Activated CD4-positive, alpha-beta T cell treated with anti-CD3 and anti-CD28 coated beads for 36 hours (primary cell): ENCODE measurements at regions of chr4 and their contacts with region 1.

Region 1: DNA sequence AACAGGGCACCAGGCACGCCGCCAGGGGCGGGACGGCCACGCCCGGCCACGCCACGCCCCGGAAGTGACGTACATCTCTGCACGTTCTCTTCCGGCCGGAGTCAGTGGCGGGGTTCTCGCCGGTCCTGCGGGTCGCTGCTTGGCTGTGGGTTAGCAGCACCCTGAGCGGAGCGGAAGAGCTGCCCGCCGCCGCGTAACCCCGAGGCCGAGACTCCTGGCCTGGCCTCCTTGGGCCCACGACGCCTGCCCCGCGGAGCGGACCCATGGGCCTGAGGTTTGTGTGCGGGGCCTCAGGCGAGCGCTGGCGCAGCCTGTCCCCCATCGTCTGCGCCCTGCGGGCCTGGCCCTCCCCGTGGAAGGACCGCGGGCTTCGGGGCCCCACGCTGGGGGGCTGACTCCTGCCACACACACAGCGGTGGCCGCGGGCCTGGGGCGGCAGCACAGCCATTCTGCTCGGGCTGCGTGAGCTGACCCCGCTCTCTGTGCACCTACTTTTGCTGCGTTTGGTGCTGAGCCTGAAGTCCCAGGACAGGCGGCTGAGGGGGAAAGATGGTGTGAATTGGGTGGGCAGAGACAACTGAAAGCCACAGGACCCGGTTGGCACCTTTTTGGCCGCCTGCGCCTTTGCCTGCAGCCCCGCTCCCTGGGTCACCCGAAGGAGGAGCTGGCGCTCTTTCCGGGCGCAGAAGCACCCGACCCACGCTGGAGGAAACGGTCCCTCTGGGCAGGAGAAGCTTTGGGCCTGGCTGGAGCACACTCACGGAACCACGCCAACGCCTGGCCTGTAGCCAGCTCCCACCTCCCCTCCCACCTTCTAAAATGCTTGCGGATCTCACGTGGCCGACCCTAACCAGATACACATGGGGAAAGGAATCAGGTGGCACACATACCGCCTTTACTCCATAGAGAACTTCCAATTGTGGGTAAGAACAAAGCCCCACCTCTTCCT is 28.1 kb downstream of the NOP14 start:
- DNase-seq: peak; percentile 98
- ATAC-seq: peak; percentile 34
- H3K4me3 Mint-ChIP-seq: peak overlapping the region; percentile 90
- H3K27ac Mint-ChIP-seq: peak overlapping the region; percentile 95
- H3K4me1 Mint-ChIP-seq: peaks cover 53% of the 10 kb centered on the region
- H3K27me3 Mint-ChIP-seq: no peaks in the 10 kb centered on the region

Region 2: GRCh38 chr4:2241410-2242353 is 693.4 kb before region 1 on chr4 and contains the starts of genes HAUS3 and POLN:
- CTCF ChIA-PET with region 1: no interaction called
- POLR2A ChIA-PET with region 1: no interaction called
- intact Hi-C with region 1: loop called in 1 of 2 experiments (anchors 5 kb)
- DNase-seq: peak; percentile 99
- ATAC-seq: peak; percentile 97
- H3K4me3 Mint-ChIP-seq: peak within 1 kb of the TSS; percentile 91
- H3K27ac Mint-ChIP-seq: peak within 1 kb of the TSS; percentile 88
- H3K4me1 Mint-ChIP-seq: peaks cover 54% of the 10 kb centered on the region
- H3K27me3 Mint-ChIP-seq: no peaks in the 10 kb centered on the region
- total RNA-seq, gene HAUS3: 14.6 to 18.6 TPM
- total RNA-seq, gene POLN: 2.3 to 3.2 TPM

Region 3: GRCh38 chr4:2536193-2537010 is 398.7 kb before region 1 on chr4 and contains the start of gene FAM193A:
- CTCF ChIA-PET with region 1: no interaction called
- POLR2A ChIA-PET with region 1: interaction called, 3 read pairs
- intact Hi-C with region 1: loop called in 1 of 2 experiments (anchors 1 kb)
- DNase-seq: peak; percentile 100
- ATAC-seq: peak; percentile 97
- H3K4me3 Mint-ChIP-seq: peak within 1 kb of the TSS; percentile 87
- H3K27ac Mint-ChIP-seq: peak within 1 kb of the TSS; percentile 88
- H3K4me1 Mint-ChIP-seq: peaks cover 24% of the 10 kb centered on the region
- H3K27me3 Mint-ChIP-seq: no peaks in the 10 kb centered on the region
- total RNA-seq, gene FAM193A: 22.1 to 30.1 TPM

Region 4: GRCh38 chr4:2761035-2761923 is 173.8 kb before region 1 on chr4:
- CTCF ChIA-PET with region 1: interaction called, 6 read pairs
- POLR2A ChIA-PET with region 1: interaction called, 4 read pairs
- intact Hi-C with region 1: loop called (anchors 1 to 5 kb)
- DNase-seq: peak; percentile 59
- ATAC-seq: peak; percentile 9
- H3K4me3 Mint-ChIP-seq: no peak overlapping the region
- H3K27ac Mint-ChIP-seq: no peak overlapping the region
- H3K4me1 Mint-ChIP-seq: peaks cover 11% of the 10 kb centered on the region
- H3K27me3 Mint-ChIP-seq: no peaks in the 10 kb centered on the region

Region 5: DNA sequence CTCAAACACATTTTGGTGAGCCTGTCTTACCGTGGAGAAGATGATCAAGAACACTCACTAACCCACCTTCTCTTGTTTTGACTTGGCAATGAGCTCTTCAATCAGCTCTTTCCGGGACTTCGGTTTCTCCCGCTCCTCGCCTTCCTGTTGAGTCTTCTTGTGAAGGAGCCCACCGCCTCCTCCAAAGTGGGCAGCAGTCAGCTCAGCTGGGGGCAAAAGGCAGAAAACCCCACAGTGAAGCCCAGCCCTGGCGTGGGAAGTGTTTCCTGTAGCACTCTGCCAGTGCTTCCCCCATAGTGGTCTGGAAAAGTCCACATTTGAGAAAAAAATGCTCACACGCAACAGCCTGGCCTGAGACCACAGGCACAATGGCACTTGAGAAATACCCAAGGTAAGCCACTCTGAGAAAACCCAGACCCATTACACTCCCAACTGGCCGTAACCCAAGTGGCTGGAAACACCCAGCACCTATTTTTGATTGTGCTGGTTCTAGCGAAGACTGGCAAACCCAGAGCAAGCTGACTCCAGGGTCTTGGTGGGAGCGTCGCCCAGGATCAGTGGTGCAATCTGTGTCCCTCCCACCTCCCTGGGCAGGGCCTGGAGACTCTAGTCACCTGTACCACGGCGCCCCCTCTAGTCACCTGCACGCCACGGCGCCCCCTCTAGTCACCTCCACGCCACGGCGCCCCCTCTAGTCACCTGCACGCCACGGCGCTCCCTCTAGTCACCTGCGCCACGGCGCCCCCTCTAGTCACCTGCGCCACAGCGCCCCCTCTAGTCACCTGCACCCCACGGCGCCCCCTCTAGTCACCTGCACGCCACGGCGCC is 19.5 kb after region 1 on chr4:
- CTCF ChIA-PET with region 1: interaction called, 45 read pairs
- POLR2A ChIA-PET with region 1: interaction called, 40 read pairs
- intact Hi-C with region 1: loop called (anchors 1 kb)
- DNase-seq: peak; percentile 88
- ATAC-seq: peak; percentile 83
- H3K4me3 Mint-ChIP-seq: peak overlapping the region; percentile 51
- H3K27ac Mint-ChIP-seq: peak overlapping the region; percentile 90
- H3K4me1 Mint-ChIP-seq: peaks cover 69% of the 10 kb centered on the region
- H3K27me3 Mint-ChIP-seq: no peaks in the 10 kb centered on the region

Region 6: DNA sequence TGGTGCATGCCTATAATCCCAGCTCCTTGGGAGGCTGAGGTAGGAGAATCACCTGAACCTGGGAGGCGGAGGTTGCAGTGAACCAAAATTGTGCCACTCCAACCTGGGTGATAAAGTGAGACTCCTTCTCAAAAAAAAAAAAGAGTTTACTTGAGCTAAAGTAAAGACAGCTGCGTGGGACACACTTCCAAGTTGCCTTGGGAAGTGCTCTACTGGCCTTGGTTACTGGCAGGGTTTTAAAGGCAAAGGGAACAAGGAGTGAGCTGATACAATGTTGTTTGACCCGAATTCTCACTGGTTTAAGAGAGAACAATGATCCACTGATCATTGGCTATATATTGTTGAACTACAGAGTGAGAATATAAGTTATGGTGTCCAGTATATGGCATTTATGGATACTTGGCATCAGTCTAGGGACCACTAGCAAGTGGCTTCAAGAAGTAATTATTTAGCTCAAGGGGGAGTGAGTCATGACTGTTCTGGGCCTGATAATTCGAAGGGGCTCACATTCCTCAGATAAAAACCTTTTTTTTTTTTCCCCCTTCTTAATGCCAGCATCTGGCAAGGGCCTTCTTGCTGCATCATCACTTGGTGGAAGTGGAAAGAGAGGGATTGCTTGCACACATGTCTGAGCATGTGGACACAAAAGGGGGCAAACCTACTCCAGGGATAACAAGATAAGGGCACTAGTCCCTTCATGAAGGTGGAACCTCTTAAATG is 60.6 kb after region 1 on chr4:
- CTCF ChIA-PET with region 1: no interaction called
- POLR2A ChIA-PET with region 1: no interaction called
- intact Hi-C with region 1: no loop called
- DNase-seq: no peak
- ATAC-seq: no peak
- H3K4me3 Mint-ChIP-seq: no peak overlapping the region
- H3K27ac Mint-ChIP-seq: no peak overlapping the region
- H3K4me1 Mint-ChIP-seq: no peaks in the 10 kb centered on the region
- H3K27me3 Mint-ChIP-seq: peaks cover 2% of the 10 kb centered on the region

Region 7: DNA sequence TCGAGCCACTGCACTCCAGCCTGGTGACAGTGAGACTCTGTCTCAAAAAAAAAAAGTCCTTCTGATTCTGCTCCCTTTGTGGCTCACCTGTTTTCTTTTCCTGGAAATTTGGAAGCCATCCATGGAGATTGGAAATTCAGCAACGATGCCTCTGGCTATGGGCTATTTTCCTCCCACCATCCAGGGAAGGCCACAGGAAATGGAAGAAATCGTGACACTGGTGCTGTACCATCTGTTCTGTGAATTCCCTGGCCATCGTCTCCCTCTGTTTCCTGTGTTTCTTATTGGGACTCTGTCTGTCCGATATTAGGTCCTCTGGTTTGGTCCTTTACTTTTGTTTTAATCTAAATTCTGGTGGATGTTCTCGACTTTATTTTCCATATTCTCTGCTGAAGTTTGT is 801.7 kb after region 1 on chr4:
- CTCF ChIA-PET with region 1: no interaction called
- POLR2A ChIA-PET with region 1: no interaction called
- intact Hi-C with region 1: no loop called
- DNase-seq: no peak
- ATAC-seq: no peak
- H3K4me3 Mint-ChIP-seq: no peak overlapping the region
- H3K27ac Mint-ChIP-seq: no peak overlapping the region
- H3K4me1 Mint-ChIP-seq: no peaks in the 10 kb centered on the region
- H3K27me3 Mint-ChIP-seq: peaks cover 7% of the 10 kb centered on the region

Region 8: GRCh38 chr4:3945511-3946290 is 1010.6 kb after region 1 on chr4:
- CTCF ChIA-PET with region 1: no interaction called
- POLR2A ChIA-PET with region 1: no interaction called
- intact Hi-C with region 1: loop called in 1 of 2 experiments (anchors 10 kb)
- DNase-seq: no peak
- ATAC-seq: no peak
- H3K4me3 Mint-ChIP-seq: no peak overlapping the region
- H3K27ac Mint-ChIP-seq: no peak overlapping the region
- H3K4me1 Mint-ChIP-seq: peaks cover 3% of the 10 kb centered on the region
- H3K27me3 Mint-ChIP-seq: peaks cover 3% of the 10 kb centered on the region